Activated CD8-positive, alpha-beta T cell treated with anti-CD3 and anti-CD28 coated beads for 36 hours (primary cell): ENCODE measurements at regions of chr16 and their contacts with region 1.

Region 1: GRCh38 chr16:2531767-2532493 is 722 bp upstream of the CEMP1 start:
- DNase-seq: peak; percentile 99
- ATAC-seq: peak; percentile 95
- H3K4me3 Mint-ChIP-seq: peak overlapping the region; percentile 88
- H3K27ac Mint-ChIP-seq: peak overlapping the region; percentile 98
- H3K4me1 Mint-ChIP-seq: peaks cover 15% of the 10 kb centered on the region
- H3K27me3 Mint-ChIP-seq: no peaks in the 10 kb centered on the region
- CTCF ChIP-seq: no peak

Region 2: DNA sequence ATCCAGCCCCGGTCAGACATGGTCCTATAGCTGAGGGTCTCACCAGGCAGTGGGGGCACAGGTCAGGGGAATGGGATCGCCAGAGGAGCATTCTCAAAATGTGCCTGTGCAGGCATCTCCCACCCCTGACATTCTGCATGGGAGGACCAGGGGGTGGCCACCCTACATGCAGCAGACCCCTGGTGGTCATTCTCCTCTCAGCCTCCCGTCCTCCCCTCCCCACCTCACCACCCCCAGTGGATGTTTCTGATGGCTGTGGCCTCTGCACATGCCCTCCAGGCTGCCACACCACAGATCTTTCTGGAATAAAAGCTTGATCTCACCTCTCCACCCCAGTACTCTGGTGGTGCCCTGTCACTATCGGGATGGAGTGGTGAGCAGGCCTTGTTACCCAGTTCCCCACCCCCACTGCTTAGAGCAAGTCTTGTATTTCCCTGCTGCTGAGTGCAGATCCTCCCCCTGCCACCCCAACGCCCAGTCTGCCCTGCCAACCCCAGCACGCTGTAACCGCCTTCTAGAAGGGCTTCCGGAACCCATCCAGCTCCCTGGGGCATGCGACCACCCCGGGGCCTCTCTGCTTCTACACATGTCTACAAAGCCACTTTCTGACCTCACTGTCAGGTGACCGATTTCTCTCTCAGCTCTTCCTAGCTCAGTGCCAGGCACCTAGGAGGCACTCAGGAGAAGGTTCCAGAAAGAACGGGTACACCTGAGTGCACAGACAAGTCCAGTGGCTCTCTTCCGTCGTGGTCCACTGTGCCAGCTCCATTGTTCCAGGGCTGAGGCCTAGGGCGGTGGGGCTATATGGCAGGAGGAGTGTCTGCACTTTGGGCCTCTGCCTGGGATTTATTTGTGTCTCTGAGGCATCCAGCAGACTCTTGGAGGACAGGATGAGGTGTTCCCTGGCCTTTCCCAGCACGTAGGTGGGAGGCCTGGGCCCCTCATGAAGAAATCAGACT is 47.7 kb before region 1 on chr16:
- CTCF ChIA-PET with region 1: no interaction called
- POLR2A ChIA-PET with region 1: no interaction called
- intact Hi-C with region 1: no loop called
- DNase-seq: no peak
- ATAC-seq: no peak
- H3K4me3 Mint-ChIP-seq: no peak overlapping the region
- H3K27ac Mint-ChIP-seq: no peak overlapping the region
- H3K4me1 Mint-ChIP-seq: peaks cover 21% of the 10 kb centered on the region
- H3K27me3 Mint-ChIP-seq: no peaks in the 10 kb centered on the region
- CTCF ChIP-seq: no peak

Region 3: GRCh38 chr16:2513405-2514322 is 18.3 kb before region 1 on chr16 and contains the start of gene ATP6V0C:
- CTCF ChIA-PET with region 1: no interaction called
- POLR2A ChIA-PET with region 1: interaction called, 67 read pairs
- intact Hi-C with region 1: no loop called
- DNase-seq: peak; percentile 93
- ATAC-seq: peak; percentile 89
- H3K4me3 Mint-ChIP-seq: peak within 1 kb of the TSS; percentile 94
- H3K27ac Mint-ChIP-seq: peak within 1 kb of the TSS; percentile 96
- H3K4me1 Mint-ChIP-seq: peaks cover 48% of the 10 kb centered on the region
- H3K27me3 Mint-ChIP-seq: no peaks in the 10 kb centered on the region
- CTCF ChIP-seq: no peak
- total RNA-seq, gene ATP6V0C: 85.9 to 88.6 TPM

Region 4: GRCh38 chr16:2520092-2520783 is 11.7 kb before region 1 on chr16 and contains the start of gene AMDHD2:
- CTCF ChIA-PET with region 1: interaction called, 4 read pairs
- POLR2A ChIA-PET with region 1: interaction called, 67 read pairs
- intact Hi-C with region 1: no loop called
- DNase-seq: peak; percentile 94
- ATAC-seq: peak; percentile 71
- H3K4me3 Mint-ChIP-seq: peak within 1 kb of the TSS; percentile 83
- H3K27ac Mint-ChIP-seq: peak within 1 kb of the TSS; percentile 92
- H3K4me1 Mint-ChIP-seq: peaks cover 49% of the 10 kb centered on the region
- H3K27me3 Mint-ChIP-seq: no peaks in the 10 kb centered on the region
- CTCF ChIP-seq: no peak
- total RNA-seq, gene AMDHD2: 28.2 to 29.0 TPM

Region 5: DNA sequence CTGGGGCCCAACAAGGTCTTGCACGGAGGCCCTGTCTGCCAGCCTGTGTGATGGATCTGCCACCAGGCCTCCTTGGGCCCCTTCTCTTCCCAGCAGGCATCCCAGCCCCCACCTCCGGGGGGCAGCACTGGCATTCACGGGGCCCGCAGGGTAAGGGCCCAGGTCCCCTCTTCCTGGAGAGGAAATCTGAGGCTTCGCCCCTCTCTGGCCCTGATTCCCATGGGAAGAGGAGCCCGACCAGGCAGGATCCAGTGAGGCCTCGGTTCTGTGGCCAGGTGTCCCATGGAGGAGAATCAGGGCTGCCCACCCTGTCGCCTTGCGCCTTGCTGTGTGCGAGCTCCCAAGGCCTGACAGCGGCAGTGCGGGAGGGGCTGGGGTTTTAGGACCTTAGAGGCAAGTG is 54.3 kb after region 1 on chr16:
- CTCF ChIA-PET with region 1: no interaction called
- POLR2A ChIA-PET with region 1: no interaction called
- intact Hi-C with region 1: loop called (anchors 10 kb)
- DNase-seq: peak; percentile 32
- ATAC-seq: peak; percentile 34
- H3K4me3 Mint-ChIP-seq: no peak overlapping the region
- H3K27ac Mint-ChIP-seq: no peak overlapping the region
- H3K4me1 Mint-ChIP-seq: peaks cover 7% of the 10 kb centered on the region
- H3K27me3 Mint-ChIP-seq: no peaks in the 10 kb centered on the region
- CTCF ChIP-seq: peak; percentile 47